ENCODE measurements at regions of chrX and their contacts with region 1.

Region 1: GRCh38 chrX:70030301-70030767 is 19.4 kb downstream of the AWAT2 start:
- DNase-seq: peak; percentile 53
- H3K4me3 ChIP-seq: no peak overlapping the region
- H3K27ac ChIP-seq: no peak overlapping the region
- H3K4me1 ChIP-seq: no peaks in the 10 kb centered on the region
- CTCF ChIP-seq: peak; percentile 75

Region 2: GRCh38 chrX:69493193-69493592 is 537.1 kb before region 1 on chrX:
- CTCF ChIA-PET with region 1: no interaction called
- POLR2A ChIA-PET with region 1: no interaction called
- intact Hi-C with region 1: loop called (anchors 1 kb)
- DNase-seq: peak; percentile 47
- H3K4me3 ChIP-seq: no peak overlapping the region
- H3K27ac ChIP-seq: no peak overlapping the region
- H3K4me1 ChIP-seq: no peaks in the 10 kb centered on the region
- CTCF ChIP-seq: peak; percentile 69

Region 3: DNA sequence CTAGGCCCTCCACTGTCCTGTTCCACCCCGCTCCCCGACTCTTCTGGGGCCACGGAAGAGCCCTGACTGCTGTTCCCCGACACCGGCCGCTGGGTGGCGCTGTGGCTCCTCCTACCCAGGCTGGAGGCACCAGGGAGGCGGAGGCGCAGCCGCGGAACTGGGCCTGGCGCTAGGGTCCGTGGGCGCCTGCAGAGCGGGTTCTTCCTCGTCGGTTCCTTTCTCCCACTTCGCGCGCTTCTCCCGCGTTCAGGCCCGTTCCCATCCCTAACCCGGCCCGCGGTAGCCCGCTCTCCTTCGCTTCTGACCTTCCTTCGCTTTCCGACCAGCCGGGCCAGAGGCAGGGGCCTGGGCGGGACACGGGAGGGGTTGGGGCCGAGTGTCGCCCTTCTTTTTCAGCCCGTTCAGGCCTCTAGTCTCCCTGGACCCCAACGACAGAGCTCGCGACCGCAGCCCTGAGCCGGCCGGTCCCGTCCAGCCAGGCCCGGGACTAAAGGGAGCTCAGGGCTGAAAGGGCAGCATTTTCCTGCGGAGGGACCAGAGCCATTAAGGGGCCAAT is 491.9 kb before region 1 on chrX:
- CTCF ChIA-PET with region 1: no interaction called
- POLR2A ChIA-PET with region 1: no interaction called
- intact Hi-C with region 1: loop called (anchors 2 kb)
- DNase-seq: peak; percentile 26
- H3K4me3 ChIP-seq: no peak overlapping the region
- H3K27ac ChIP-seq: no peak overlapping the region
- H3K4me1 ChIP-seq: peaks cover 26% of the 10 kb centered on the region
- CTCF ChIP-seq: peak; percentile 69

Region 4: DNA sequence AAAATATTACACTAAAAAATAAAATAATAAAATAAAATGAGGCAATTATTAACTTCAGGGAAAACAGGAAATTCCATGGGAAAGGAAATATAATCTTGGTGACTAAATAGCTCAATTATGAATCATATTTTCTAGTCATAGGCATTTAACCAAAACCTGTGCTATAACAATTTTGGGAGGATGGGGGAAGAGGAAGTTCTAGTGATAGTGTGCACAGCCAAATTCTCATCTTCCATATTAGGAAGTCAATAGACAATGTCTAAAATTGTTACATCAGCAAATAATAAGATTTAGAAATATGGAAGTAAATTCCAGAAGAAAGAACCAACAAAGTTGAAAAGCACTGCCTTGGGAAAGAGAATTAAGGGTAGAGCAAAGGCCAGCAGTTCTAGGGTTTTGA is 16.6 kb after region 1 on chrX:
- CTCF ChIA-PET with region 1: no interaction called
- POLR2A ChIA-PET with region 1: no interaction called
- intact Hi-C with region 1: no loop called
- DNase-seq: no peak
- H3K4me3 ChIP-seq: no peak overlapping the region
- H3K27ac ChIP-seq: no peak overlapping the region
- H3K4me1 ChIP-seq: no peaks in the 10 kb centered on the region
- CTCF ChIP-seq: no peak

Region 5: DNA sequence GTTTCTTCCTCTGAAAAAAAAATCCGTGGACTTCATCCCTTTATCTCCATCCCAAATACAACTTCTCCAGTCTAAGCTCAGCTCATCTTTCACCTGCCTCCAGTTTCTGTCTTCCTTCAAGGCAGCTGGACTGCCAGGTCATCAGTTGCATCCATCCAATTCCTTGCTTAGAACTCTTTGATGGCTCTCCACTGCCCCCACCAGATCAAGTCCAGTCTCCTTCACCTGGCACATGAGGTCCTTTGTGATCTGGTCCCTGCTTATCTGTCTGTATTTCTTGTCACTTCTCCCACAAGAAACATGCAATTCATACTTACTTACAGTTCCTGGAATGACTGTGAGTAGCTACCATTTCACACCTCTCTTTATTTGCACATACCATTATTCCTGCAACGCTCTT is 65.7 kb after region 1 on chrX:
- CTCF ChIA-PET with region 1: interaction called, 3 read pairs
- POLR2A ChIA-PET with region 1: no interaction called
- intact Hi-C with region 1: loop called (anchors 1 kb)
- DNase-seq: no peak
- H3K4me3 ChIP-seq: no peak overlapping the region
- H3K27ac ChIP-seq: no peak overlapping the region
- H3K4me1 ChIP-seq: no peaks in the 10 kb centered on the region
- CTCF ChIP-seq: 0 out of 2 replicates have a peak, but pooled peaks have one; percentile 14

Region 6: DNA sequence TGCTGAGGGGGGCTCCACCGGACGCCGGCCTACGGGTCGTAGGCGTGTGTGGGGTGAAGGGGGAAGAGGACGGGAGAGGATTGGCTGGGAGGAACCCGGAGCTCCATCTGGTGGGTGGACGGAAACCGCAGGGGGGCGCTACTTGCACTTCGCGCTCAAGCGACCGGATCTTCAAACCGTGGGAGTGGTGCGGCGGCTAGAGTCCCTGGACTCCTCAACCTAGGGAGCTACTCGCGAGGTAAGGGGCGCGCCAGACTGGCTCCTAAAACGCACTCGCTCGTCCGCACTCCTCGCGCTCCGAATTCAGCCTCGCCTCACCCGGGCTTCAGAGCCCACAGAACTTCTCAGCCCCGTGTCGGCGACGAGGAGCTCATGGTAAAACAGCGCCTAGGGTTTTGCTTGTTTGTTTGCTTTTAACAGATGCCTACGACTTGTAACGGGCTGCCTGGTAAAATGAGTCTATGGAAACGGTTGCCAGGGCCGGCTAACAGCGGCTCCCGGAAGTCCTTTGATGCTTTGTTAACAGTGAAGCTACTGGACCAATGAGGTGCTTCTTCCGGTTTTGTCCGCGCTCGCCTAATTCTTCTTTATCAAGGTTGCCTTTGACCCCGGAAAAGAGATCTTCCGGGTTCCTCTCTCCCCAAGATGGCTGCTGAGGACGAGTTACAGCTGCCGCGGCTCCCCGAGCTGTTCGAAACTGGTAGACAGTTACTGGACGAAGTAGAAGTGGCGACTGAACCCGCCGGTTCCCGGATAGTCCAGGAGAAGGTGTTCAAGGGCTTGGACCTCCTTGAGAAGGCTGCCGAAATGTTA is 103.2 kb after region 1 on chrX and contains the start of gene IGBP1:
- CTCF ChIA-PET with region 1: no interaction called
- POLR2A ChIA-PET with region 1: no interaction called
- intact Hi-C with region 1: loop called (anchors 2 kb)
- DNase-seq: peak; percentile 90
- H3K4me3 ChIP-seq: peak within 1 kb of the TSS; percentile 82
- H3K27ac ChIP-seq: peak within 1 kb of the TSS; percentile 98
- H3K4me1 ChIP-seq: peaks cover 24% of the 10 kb centered on the region
- CTCF ChIP-seq: peak; percentile 77
- total RNA-seq, gene IGBP1: 47.2 and 60.0 TPM in 2 replicates